GM12878 (cell line): ENCODE measurements at regions of chr11 and their contacts with region 1.

Region 1: DNA sequence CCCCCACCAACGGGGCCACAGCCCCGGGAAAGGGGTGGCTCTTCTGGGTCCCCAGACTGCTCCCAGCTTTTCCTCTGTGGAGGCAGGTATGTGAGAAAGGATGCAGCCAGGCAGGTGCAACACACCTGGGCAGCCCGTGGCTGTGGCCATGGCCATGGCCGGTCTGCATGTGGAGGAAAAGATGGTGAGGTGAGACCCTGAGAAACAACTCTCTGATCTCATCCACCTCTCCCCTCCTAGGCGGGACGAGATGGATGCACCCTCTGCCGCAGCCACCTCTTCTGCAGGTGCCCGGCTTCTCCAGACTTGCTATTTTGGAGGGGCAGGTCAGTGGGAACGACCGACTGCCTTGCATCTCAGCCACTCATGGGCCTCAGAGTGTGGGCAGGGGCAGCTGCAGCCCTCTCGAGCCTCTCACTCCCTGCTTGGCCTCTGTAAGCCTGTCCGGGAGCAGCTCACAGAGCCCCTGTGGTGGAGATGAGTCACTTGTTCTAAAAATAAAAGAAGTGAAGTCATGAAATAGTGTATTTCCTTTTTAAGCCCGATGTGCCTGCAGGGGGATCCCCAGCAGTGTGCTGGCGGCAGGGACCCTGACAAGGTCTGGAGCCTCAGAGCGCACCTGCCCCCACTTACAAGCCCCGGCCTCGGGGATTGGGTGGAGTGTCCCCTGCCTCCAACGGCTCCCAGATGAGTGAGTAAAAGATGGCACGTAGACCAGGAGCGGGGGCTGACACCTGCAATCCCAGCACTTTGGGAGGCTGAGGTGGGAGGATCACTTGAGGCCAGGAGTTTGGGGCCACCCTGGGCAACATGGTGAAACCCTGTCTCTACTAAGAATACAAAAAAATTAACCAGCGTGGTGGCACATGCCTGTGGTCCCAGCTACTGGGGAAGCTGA is 10.7 kb downstream of the SMIM38 start:
- DNase-seq: peak; percentile 75
- ATAC-seq: peak; percentile 95
- H3K4me3 ChIP-seq: peak overlapping the region; percentile 49; the same call in 1 of the 2 replicates
- H3K27ac ChIP-seq: peak overlapping the region; percentile 83
- H3K4me1 ChIP-seq: peaks cover 21% of the 10 kb centered on the region
- H3K27me3 ChIP-seq: no peaks in the 10 kb centered on the region
- CTCF ChIP-seq: no peak
- EP300 ChIP-seq: peak; percentile 79 to 88
- POLR2A ChIP-seq: peak; percentile 60
- RAD21 ChIP-seq: 0 out of 2 replicates have a peak, but pooled peaks have one; percentile 29

Region 2: GRCh38 chr11:69229511-69229910 is 63.0 kb after region 1 on chr11:
- CTCF ChIA-PET with region 1: no interaction called
- POLR2A ChIA-PET with region 1: no interaction called
- RAD21 ChIA-PET with region 1: no interaction called
- SMC1A ChIA-PET with region 1: no interaction called
- in situ Hi-C with region 1: no loop called
- intact Hi-C with region 1: no loop called
- DNase-seq: no peak
- ATAC-seq: no peak
- H3K4me3 ChIP-seq: no peak overlapping the region
- H3K27ac ChIP-seq: no peak overlapping the region
- H3K4me1 ChIP-seq: no peaks in the 10 kb centered on the region
- H3K27me3 ChIP-seq: no peaks in the 10 kb centered on the region
- CTCF ChIP-seq: no peak
- EP300 ChIP-seq: no peak
- POLR2A ChIP-seq: no peak
- RAD21 ChIP-seq: no peak

Region 3: DNA sequence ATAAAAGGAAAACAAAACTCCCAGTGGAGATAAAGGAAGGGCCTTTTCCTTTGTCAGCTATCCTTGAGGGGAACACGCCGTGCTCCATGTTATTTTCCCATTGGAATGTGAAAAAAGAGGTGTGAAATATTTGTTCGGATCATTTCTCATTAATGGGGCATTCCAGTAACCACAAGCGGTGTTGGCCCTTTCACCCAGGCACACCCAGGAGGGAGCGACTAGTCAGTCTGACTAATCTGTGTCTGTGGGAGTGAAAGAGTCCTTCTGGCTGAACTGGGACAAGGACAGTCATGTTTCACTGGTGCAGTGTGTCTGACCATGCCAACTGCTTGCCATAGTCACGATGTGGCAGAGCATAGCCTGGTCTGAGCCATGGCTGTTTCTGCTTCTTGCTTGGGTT is 114.5 kb after region 1 on chr11:
- CTCF ChIA-PET with region 1: no interaction called
- POLR2A ChIA-PET with region 1: no interaction called
- RAD21 ChIA-PET with region 1: interaction called, 6 read pairs
- SMC1A ChIA-PET with region 1: interaction called, 12 read pairs
- in situ Hi-C with region 1: no loop called
- intact Hi-C with region 1: no loop called
- DNase-seq: no peak
- ATAC-seq: no peak
- H3K4me3 ChIP-seq: no peak overlapping the region
- H3K27ac ChIP-seq: no peak overlapping the region
- H3K4me1 ChIP-seq: peaks cover 19% of the 10 kb centered on the region
- H3K27me3 ChIP-seq: no peaks in the 10 kb centered on the region; a peak in 1 of 4 replicates
- CTCF ChIP-seq: no peak
- EP300 ChIP-seq: no peak
- POLR2A ChIP-seq: no peak
- RAD21 ChIP-seq: no peak